ENCODE measurements at regions of chr2 and their contacts with region 1.

Region 1: DNA sequence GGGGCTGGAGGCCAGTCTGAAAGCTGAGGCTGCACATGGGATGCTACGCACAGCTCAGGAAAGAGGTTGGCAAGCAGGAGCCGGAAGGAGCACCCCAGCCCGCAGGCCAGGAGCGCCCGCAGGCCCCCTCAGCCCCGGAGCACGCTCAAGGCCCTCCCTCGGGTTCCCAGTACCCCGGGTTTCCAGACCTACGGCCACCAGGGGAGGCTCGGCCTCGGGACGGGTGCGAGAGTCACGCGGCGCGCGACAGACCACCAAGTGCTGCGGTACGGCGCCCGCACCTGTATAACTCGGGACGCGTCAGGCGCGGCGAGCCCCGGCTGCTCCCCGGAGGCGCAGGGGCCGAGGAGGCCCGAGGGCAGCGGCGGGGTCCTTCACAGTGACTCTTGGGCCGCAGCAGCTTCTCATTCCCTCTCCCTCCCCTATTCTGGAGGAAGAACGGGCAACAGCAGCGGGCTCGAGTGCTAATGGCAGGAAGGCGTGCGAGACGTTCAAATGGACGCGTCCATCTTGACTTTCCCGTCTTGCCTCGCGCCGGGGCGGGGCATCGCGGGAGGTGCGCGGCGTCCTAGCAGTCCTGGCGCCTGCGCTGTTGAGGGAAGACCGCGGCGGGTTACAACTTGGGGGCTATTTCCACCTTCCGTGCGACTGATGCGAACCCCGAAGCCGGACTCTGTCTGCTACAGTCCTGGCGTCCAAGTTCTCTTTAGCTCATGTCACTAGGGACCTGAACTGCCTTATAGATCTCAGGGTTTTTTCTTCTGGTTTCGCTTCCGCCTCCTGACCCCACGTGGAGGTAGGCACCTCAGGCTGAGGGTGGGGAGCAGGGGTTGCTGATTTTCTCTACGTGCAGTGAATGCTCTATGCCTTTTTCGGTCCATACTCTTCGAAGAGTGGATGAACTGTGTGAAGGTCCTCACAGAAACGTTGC is at the start of gene ANAPC1:
- DNase-seq: peak; percentile 79
- ATAC-seq: peak; percentile 91
- H3K4me3 Mint-ChIP-seq: peak within 1 kb of the TSS; percentile 92
- H3K27ac Mint-ChIP-seq: peak within 1 kb of the TSS; percentile 94
- H3K4me1 Mint-ChIP-seq: peaks cover 11% of the 10 kb centered on the region
- H3K27me3 Mint-ChIP-seq: no peaks in the 10 kb centered on the region
- CTCF ChIP-seq: no peak
- total RNA-seq, gene ANAPC1: 74.0 and 88.1 TPM in 2 replicates

Region 2: DNA sequence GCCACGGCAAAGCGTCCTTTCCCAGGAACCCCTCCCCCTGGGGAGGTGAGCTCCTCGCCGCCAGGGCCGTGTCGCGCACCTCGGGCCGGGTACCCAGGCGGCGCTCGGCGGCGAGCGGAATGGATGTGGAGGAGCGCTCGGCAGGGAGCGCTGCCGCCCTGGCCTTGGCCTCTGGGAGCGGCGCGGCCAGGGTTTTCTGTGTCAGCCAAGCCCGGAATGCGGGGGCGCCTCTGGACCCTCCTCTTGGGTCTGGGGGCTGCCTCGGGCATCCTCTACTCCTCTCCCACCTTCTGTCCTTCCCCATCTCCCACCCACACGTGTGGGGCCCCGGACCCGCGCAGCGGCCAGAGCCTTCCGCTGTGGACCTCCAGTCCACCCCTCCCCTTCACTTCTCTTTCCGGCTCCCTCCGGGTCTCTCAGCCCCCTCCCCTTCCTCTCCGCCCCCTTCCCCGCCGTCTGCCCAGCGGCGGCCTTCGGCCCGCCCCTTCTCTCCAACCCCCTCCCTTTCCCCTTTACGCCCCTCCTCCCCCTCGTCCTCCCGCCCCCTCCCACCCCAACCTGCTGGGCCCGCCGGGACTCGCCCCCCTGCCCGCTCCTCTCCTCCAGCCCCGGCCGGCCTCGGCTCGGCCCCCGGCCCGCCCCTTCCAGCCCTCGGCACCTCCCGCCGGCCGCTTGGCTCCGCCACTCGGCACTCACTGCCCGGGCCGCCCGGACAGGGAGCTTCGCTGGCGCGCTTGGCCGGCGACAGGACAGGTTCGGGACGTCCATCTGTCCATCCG is 14.2 kb after region 1 on chr2 and contains the start of gene MERTK:
- CTCF ChIA-PET with region 1: interaction called, 5 read pairs
- POLR2A ChIA-PET with region 1: interaction called, 3 read pairs
- intact Hi-C with region 1: loop called (anchors 1 kb)
- DNase-seq: peak; percentile 55
- ATAC-seq: peak; percentile 79
- H3K4me3 Mint-ChIP-seq: peak within 1 kb of the TSS; percentile 80
- H3K27ac Mint-ChIP-seq: no peak within 1 kb of the TSS
- H3K4me1 Mint-ChIP-seq: peaks cover 13% of the 10 kb centered on the region
- H3K27me3 Mint-ChIP-seq: peaks cover 33% of the 10 kb centered on the region
- CTCF ChIP-seq: no peak
- total RNA-seq, gene MERTK: 0.22 TPM in 1 of 2 replicates, not detected in the other

Region 3: DNA sequence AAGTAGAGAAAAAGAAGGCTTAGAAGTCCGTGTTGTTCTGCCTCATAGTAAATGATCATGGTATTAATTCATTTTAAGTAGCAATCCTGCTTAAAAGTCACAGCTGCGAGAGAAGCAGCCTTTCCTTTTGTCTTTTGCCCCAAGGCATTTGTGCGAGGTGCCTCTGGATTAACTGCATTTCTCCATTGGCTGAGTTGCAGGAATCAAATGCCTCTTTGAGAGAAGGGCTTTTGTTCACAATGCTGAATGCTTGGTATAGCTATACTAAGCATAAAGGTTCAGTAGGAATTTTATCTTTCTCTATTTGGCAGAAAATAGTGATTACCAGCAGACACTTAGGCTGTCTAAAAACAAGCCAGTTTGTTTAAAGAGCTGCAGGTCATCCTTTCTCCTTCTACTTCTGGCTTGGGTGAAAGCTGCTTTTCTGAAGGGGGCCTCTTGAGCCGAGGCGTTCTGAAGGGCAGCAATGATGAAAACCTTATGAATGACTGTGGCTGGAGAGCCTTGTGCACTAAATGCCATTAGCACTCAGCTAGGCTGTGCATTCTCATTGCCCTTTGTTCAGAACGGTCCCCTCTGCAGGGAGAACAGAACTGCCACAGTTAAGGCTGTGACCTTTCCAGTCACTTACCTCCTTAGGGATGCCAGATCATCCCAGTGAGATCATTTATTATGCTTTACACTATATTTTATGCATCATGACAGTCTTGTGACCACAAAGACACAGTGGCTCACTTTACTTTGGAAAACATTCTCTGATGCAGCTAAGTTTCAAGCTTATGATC is 102.4 kb after region 1 on chr2:
- CTCF ChIA-PET with region 1: no interaction called
- POLR2A ChIA-PET with region 1: no interaction called
- intact Hi-C with region 1: no loop called
- DNase-seq: no peak
- ATAC-seq: no peak
- H3K4me3 Mint-ChIP-seq: no peak overlapping the region
- H3K27ac Mint-ChIP-seq: no peak overlapping the region
- H3K4me1 Mint-ChIP-seq: no peaks in the 10 kb centered on the region
- H3K27me3 Mint-ChIP-seq: peaks cover 8% of the 10 kb centered on the region
- CTCF ChIP-seq: no peak

Region 4: DNA sequence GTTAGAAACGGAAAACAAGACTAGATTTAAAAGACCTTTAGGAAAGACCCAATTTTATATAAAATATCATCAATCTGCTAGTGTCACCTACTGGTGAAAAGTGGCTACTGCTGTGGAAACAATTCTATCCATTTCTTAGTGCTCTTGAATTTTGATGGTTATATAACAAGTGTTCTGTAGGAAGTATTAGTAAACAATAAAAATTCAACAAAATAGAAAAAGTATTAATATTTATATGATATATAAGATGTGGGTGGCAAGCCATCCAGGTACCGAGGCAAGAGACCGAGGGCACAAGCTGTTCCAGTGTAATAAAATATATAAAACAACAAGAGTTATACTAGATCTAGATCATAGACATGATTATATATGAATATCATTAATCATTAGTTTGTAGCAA is 165.0 kb after region 1 on chr2:
- CTCF ChIA-PET with region 1: interaction called, 35 read pairs
- POLR2A ChIA-PET with region 1: interaction called, 33 read pairs
- intact Hi-C with region 1: loop called (anchors 1 kb)
- DNase-seq: no peak
- ATAC-seq: peak; percentile 88
- H3K4me3 Mint-ChIP-seq: no peak overlapping the region
- H3K27ac Mint-ChIP-seq: no peak overlapping the region
- H3K4me1 Mint-ChIP-seq: peaks cover 7% of the 10 kb centered on the region
- H3K27me3 Mint-ChIP-seq: peaks cover 5% of the 10 kb centered on the region
- CTCF ChIP-seq: peak; percentile 55

Region 5: GRCh38 chr2:112129060-112129459 is 245.1 kb after region 1 on chr2:
- CTCF ChIA-PET with region 1: no interaction called
- POLR2A ChIA-PET with region 1: no interaction called
- intact Hi-C with region 1: no loop called
- DNase-seq: no peak
- ATAC-seq: no peak
- H3K4me3 Mint-ChIP-seq: no peak overlapping the region
- H3K27ac Mint-ChIP-seq: no peak overlapping the region
- H3K4me1 Mint-ChIP-seq: no peaks in the 10 kb centered on the region
- H3K27me3 Mint-ChIP-seq: no peaks in the 10 kb centered on the region
- CTCF ChIP-seq: no peak

Region 6: GRCh38 chr2:112259509-112260294 is 375.8 kb after region 1 on chr2:
- CTCF ChIA-PET with region 1: no interaction called
- POLR2A ChIA-PET with region 1: interaction called, 6 read pairs
- intact Hi-C with region 1: loop called (anchors 1 kb)
- DNase-seq: peak; percentile 66
- ATAC-seq: peak; percentile 38
- H3K4me3 Mint-ChIP-seq: peak overlapping the region; percentile 75
- H3K27ac Mint-ChIP-seq: no peak overlapping the region
- H3K4me1 Mint-ChIP-seq: peaks cover 14% of the 10 kb centered on the region
- H3K27me3 Mint-ChIP-seq: no peaks in the 10 kb centered on the region
- CTCF ChIP-seq: peak; percentile 68

Region 7: GRCh38 chr2:112542123-112542983 is 658.4 kb after region 1 on chr2 and contains the start of gene POLR1B:
- CTCF ChIA-PET with region 1: no interaction called
- POLR2A ChIA-PET with region 1: no interaction called
- intact Hi-C with region 1: loop called (anchors 1 kb)
- DNase-seq: peak; percentile 72
- ATAC-seq: peak; percentile 77
- H3K4me3 Mint-ChIP-seq: no peak within 1 kb of the TSS
- H3K27ac Mint-ChIP-seq: no peak within 1 kb of the TSS
- H3K4me1 Mint-ChIP-seq: peaks cover 19% of the 10 kb centered on the region
- H3K27me3 Mint-ChIP-seq: no peaks in the 10 kb centered on the region
- CTCF ChIP-seq: no peak
- total RNA-seq, gene POLR1B: 43.1 and 48.8 TPM in 2 replicates

Measured in activated B cell treated with CpG ODN at 0.5 μM for 24 hours (primary cell).